PC-9 (cell line): ENCODE measurements at regions of chr12 and their contacts with region 1.

Region 1: GRCh38 chr12:111396726-111397445 is 8.8 kb upstream of the SH2B3 start:
- DNase-seq: peak; percentile 76 to 84
- H3K4me3 ChIP-seq: peak overlapping the region; percentile 26; the same call in 1 of the 2 replicates
- H3K27ac ChIP-seq: peak overlapping the region; percentile 71
- H3K4me1 ChIP-seq: peaks cover 31% of the 10 kb centered on the region
- H3K27me3 ChIP-seq: no peaks in the 10 kb centered on the region
- CTCF ChIP-seq: peak; percentile 98

Region 2: GRCh38 chr12:111330800-111331752 is 65.8 kb before region 1 on chr12:
- CTCF ChIA-PET with region 1: no interaction called
- POLR2A ChIA-PET with region 1: no interaction called
- intact Hi-C with region 1: loop called (anchors 5 kb)
- DNase-seq: no peak
- H3K4me3 ChIP-seq: no peak overlapping the region
- H3K27ac ChIP-seq: no peak overlapping the region
- H3K4me1 ChIP-seq: no peaks in the 10 kb centered on the region
- H3K27me3 ChIP-seq: no peaks in the 10 kb centered on the region
- CTCF ChIP-seq: peak; percentile 47; the same call in 1 of the 2 replicates

Region 3: GRCh38 chr12:111434680-111435338 is 37.9 kb after region 1 on chr12:
- CTCF ChIA-PET with region 1: interaction called, 3 read pairs
- POLR2A ChIA-PET with region 1: no interaction called
- intact Hi-C with region 1: loop called (anchors 5 kb)
- DNase-seq: no peak
- H3K4me3 ChIP-seq: no peak overlapping the region
- H3K27ac ChIP-seq: no peak overlapping the region
- H3K4me1 ChIP-seq: peaks cover 34% of the 10 kb centered on the region
- H3K27me3 ChIP-seq: no peaks in the 10 kb centered on the region
- CTCF ChIP-seq: no peak

Region 4: DNA sequence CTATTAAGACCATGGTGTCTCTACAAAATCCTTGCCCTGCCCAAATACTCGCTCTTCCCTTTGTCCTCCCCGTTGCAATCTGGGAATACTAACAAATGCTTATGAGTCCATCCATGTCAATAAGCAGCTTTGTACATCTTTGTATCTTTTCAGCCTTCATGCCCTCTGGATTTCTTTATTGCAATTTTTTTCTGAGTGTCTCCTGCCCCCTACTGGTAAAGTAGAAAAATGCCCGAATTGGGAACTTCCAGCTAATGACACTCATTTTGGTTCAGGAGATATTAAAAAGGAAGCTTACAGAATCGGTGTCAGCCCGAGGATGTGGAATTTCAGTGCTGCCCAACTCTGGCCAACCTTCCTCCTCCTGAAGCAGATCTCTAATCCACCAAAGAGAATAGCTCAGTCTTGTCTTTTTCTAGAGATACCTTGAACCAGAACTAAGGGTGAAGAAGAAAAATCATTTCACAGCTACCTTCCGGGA is 54.8 kb after region 1 on chr12:
- CTCF ChIA-PET with region 1: interaction called, 20 read pairs
- POLR2A ChIA-PET with region 1: no interaction called
- intact Hi-C with region 1: loop called (anchors 1 kb)
- DNase-seq: no peak
- H3K4me3 ChIP-seq: no peak overlapping the region
- H3K27ac ChIP-seq: no peak overlapping the region
- H3K4me1 ChIP-seq: no peaks in the 10 kb centered on the region
- H3K27me3 ChIP-seq: no peaks in the 10 kb centered on the region
- CTCF ChIP-seq: peak; percentile 93

Region 5: GRCh38 chr12:111812881-111813741 is 416.2 kb after region 1 on chr12:
- CTCF ChIA-PET with region 1: interaction called, 3 read pairs
- POLR2A ChIA-PET with region 1: interaction called, 3 read pairs
- intact Hi-C with region 1: loop called (anchors 5 kb)
- DNase-seq: peak; percentile 59 to 69
- H3K4me3 ChIP-seq: no peak overlapping the region
- H3K27ac ChIP-seq: no peak overlapping the region
- H3K4me1 ChIP-seq: no peaks in the 10 kb centered on the region
- H3K27me3 ChIP-seq: peaks cover 4% of the 10 kb centered on the region; the same call in 1 of the 2 replicates
- CTCF ChIP-seq: peak; percentile 84